Cardiac septum (tissue), 1 donor: ENCODE measurements at regions of chr21 and their contacts with region 1.

Region 1: GRCh38 chr21:26842976-26843932 is 2.0 kb downstream of the ADAMTS1 start:
- DNase-seq: peak; percentile 95

Region 2: GRCh38 chr21:26437326-26438009 is 405.8 kb before region 1 on chr21:
- intact Hi-C with region 1: no loop called
- DNase-seq: no peak

Region 3: GRCh38 chr21:26769613-26770188 is 73.6 kb before region 1 on chr21:
- intact Hi-C with region 1: loop called (anchors 2 kb)
- DNase-seq: no peak

Region 4: DNA sequence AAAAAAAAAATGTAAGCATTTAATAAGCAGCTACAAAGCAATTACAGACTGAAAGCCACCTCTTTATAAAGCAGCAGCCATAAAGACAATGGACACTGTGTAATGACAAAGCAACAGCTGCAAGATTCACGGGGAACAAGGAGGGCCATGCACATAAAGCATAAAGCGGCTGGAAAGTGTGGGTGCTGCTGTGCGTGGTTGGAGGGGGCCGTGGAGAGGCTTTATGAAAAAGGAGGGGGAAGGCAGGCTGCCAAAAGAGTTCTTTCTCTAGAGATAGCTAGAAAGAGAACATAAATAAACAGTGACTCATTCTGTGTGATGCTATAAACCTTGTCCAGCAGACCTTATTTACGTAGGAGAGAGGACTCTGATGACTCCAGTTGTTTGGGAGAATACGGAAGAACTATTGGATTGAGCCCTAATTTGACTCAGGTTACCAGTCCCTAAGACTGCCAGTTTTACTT is 47.4 kb before region 1 on chr21:
- intact Hi-C with region 1: loop called (anchors 2 kb)
- DNase-seq: no peak

Region 5: DNA sequence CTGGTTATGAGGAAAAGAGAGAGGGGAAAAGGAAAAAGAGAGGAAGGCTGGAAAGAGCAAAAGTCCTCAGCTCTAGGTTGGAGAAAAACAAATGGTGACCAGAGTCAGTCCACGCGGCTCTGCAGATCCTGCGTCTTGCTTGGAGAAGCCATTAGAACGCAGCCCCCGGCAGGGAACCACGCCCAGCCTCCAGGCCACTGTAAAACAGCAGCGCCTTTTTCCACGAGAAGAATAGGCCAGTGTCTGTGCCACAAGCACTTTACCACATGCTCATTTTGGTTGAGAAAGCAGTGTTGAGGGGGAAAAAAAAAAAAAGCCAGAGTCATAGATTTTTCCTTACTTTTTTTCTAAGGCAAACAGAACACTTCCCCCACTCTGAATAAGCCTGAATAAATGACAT is 970.5 kb after region 1 on chr21:
- intact Hi-C with region 1: loop called (anchors 10 kb)
- DNase-seq: no peak

Region 6: GRCh38 chr21:28516991-28517592 is 1673.8 kb after region 1 on chr21:
- intact Hi-C with region 1: loop called (anchors 10 kb)
- DNase-seq: peak; percentile 78

Region 7: DNA sequence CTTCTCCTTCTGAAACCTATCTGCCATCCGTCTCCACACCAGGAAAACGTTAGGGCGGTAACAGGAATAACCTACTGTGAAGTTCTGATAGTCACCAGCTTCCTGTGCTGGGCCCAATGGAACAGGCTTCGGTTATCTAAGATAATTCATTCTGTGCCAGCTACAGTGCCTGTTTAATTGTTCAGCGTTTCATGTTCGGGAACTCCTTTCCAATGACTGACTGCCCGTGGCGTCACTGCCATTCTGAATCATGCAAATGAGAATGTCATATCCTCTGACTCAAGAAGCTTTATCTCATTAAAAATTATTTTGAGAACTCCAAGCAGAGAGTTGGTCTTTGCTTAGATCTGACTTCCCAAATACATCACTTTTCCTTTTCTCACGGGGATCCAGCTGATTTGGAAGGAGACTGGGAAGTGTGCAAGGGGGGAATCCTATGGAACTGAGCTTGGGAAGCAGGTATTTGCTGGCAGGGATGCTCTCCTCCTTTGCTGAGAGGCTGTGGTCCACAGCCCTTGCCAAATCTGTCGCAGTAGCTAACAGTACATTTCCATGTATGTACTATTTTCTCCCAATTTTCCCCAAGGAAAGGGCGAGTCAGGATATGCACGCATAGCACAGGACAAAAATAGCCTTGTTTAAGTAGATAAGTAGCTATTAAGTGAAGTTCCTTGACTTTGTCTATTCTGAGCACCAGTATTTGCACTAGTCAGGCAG is 1790.7 kb after region 1 on chr21:
- intact Hi-C with region 1: loop called (anchors 10 kb)
- DNase-seq: peak; percentile 74

Region 8: GRCh38 chr21:28745131-28746016 is 1902.1 kb after region 1 on chr21:
- intact Hi-C with region 1: loop called (anchors 5 kb)
- DNase-seq: peak; percentile 84